Ovary (tissue), 10 donors: ENCODE measurements at regions of chr11 and their contacts with region 1.

Region 1: GRCh38 chr11:68447015-68447801 is 13.3 kb upstream of the PPP6R3 start:
- DNase-seq: peak; percentile 71 to 87 (median 84)
- H3K4me3 ChIP-seq: no peak overlapping the region
- H3K27ac ChIP-seq: no peak overlapping the region
- H3K4me1 ChIP-seq: no peaks in the 10 kb centered on the region
- H3K27me3 ChIP-seq: no peaks in the 10 kb centered on the region
- CTCF ChIP-seq: peak; percentile 86 to 92 (median 90)
- EP300 ChIP-seq: no peak
- POLR2A ChIP-seq: no peak

Region 2: DNA sequence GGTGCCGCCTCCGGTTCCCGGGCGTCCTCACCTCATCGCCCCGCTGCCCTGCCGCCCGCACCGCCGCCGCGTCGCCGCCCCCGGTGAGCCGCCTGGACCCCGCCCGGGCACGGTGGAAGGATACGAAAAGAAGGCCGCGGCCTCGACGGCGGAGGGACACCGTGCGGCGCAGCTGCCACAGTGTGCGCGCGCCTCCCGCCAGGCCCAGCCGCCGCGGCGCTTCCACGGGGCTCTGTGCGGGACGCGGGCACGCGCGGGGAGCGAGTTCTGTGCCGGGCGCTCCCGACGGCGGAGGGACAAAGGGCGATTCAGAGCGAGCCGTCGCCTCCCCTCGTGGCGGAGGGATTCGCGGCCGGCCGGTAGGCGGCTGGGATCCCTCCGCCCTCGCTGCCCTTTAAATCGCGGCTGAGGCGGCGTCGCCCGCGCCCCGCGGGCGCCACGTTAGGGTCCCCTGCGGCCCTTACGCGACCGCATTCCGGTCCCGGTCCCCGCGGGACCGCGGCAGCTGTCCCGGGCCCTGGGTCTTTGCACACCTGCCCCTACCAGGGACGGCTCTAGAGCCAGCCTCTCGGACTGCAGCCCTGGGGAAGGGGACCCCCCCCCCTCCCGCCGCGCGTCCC is 233.5 kb before region 1 on chr11:
- intact Hi-C with region 1: loop called in 1 of 4 experiments (anchors 10 kb)
- DNase-seq: peak; percentile 90 to 94 (median 91)
- H3K4me3 ChIP-seq: peak overlapping the region; percentile 75
- H3K27ac ChIP-seq: peak overlapping the region; percentile 96 to 100
- H3K4me1 ChIP-seq: peaks cover 16% of the 10 kb centered on the region
- H3K27me3 ChIP-seq: no peaks in the 10 kb centered on the region
- CTCF ChIP-seq: peak in 2 of 3 donors; percentile 38 to 62
- EP300 ChIP-seq: no peak
- POLR2A ChIP-seq: peak; percentile 73

Region 3: DNA sequence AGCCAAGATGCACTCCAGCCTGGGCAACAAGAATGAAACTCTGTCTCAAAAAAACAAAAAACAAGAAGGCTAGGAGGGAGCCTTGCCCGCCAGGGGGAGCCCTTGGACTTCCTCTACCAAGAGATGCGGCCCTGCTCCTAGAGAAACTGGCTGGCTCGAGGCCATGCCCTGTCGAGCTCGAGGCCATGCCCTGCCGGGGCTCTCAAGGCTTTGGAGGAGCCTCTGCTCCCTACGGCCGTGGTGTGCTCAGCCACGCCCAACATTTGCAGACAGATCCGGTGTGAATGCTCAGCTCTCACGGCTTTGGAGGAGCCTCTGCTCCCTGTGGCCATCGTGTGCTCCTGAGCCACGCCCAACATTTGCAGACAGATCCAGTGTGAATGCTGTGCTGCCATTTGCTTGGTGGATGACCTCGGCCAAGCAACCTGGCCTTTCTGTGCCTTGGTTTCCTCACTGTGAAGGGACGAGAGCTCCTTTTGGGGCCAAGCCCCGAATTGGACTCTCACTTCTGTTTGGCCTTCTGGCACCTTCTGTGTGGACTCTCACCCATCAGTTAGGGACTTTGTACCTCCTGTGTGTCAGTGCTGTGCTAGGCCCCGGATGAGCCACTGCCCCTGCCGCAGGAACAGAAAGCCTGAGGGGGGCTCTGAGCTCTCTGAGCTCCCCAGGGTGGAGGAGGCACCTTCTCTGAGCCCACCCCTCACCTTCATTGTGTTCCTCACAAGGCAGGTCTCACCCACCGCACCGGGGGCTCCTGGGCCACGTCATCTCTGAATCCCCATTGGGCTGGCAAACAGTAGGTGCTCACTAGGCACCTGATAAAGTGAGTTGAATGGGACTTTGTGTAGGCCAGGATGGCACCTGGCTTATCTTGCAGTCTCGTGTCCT is 189.5 kb before region 1 on chr11:
- intact Hi-C with region 1: loop called in 3 of 4 experiments (anchors 2 to 10 kb)
- DNase-seq: peak; percentile 97 to 99 (median 97)
- H3K4me3 ChIP-seq: no peak overlapping the region
- H3K27ac ChIP-seq: peak overlapping the region in 1 of 2 donors; percentile 73
- H3K4me1 ChIP-seq: peaks cover 9% of the 10 kb centered on the region
- H3K27me3 ChIP-seq: no peaks in the 10 kb centered on the region
- CTCF ChIP-seq: peak; percentile 88 to 95 (median 89)
- EP300 ChIP-seq: no peak
- POLR2A ChIP-seq: no peak

Region 4: DNA sequence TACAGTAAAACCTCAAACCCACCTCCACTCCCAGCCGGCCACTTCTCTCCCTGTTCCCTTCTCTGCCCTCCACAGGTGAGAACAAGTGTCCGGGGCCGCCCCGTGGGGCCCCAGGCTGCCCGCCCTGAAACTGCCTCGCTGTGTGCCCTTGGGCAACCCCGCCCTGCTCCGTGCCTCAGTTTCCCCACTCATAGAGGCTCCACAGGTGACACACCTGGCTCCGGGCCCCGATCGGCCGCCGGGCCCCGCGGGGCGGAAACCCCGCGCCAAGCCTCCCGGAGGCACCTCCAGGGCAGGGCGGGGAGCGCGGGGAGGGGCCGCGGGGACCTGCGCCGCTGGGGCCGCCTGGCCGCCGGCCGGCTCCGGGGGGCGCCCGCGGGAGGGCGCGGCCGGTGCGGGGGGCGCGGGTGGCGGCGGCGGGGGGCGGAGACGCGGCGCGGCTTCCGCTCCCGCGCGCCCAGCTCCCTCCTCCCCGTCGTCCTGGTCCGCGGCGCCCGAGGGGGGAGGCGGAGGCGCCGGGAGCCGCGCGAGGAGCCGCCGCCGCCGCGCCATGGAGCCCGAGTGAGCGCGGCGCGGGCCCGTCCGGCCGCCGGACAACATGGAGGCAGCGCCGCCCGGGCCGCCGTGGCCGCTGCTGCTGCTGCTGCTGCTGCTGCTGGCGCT is 135.0 kb before region 1 on chr11 and contains the start of gene LRP5:
- intact Hi-C with region 1: loop called in 1 of 4 experiments (anchors 10 kb)
- DNase-seq: peak; percentile 43 to 71 (median 63)
- H3K4me3 ChIP-seq: peak within 1 kb of the TSS; percentile 64
- H3K27ac ChIP-seq: peak within 1 kb of the TSS; percentile 70 to 74
- H3K4me1 ChIP-seq: peaks cover 19% of the 10 kb centered on the region
- H3K27me3 ChIP-seq: no peaks in the 10 kb centered on the region
- CTCF ChIP-seq: no peak
- EP300 ChIP-seq: no peak
- POLR2A ChIP-seq: no peak
- total RNA-seq, gene LRP5: 21.8 to 63.8 (median 52.9) TPM

Region 5: GRCh38 chr11:68398995-68399851 is 48.0 kb before region 1 on chr11:
- intact Hi-C with region 1: loop called in 1 of 4 experiments (anchors 10 kb)
- DNase-seq: peak; percentile 60 to 84 (median 70)
- H3K4me3 ChIP-seq: no peak overlapping the region
- H3K27ac ChIP-seq: peak overlapping the region; percentile 13 to 75
- H3K4me1 ChIP-seq: peaks cover 21% of the 10 kb centered on the region
- H3K27me3 ChIP-seq: no peaks in the 10 kb centered on the region
- CTCF ChIP-seq: no peak
- EP300 ChIP-seq: no peak
- POLR2A ChIP-seq: no peak

Region 6: GRCh38 chr11:68506908-68507307 is 59.7 kb after region 1 on chr11:
- intact Hi-C with region 1: no loop called
- DNase-seq: no peak
- H3K4me3 ChIP-seq: no peak overlapping the region
- H3K27ac ChIP-seq: no peak overlapping the region
- H3K4me1 ChIP-seq: peaks cover 28% of the 10 kb centered on the region
- H3K27me3 ChIP-seq: no peaks in the 10 kb centered on the region
- CTCF ChIP-seq: no peak
- EP300 ChIP-seq: no peak
- POLR2A ChIP-seq: no peak